ENCODE measurements at regions of chr19 and their contacts with region 1.

Region 1: DNA sequence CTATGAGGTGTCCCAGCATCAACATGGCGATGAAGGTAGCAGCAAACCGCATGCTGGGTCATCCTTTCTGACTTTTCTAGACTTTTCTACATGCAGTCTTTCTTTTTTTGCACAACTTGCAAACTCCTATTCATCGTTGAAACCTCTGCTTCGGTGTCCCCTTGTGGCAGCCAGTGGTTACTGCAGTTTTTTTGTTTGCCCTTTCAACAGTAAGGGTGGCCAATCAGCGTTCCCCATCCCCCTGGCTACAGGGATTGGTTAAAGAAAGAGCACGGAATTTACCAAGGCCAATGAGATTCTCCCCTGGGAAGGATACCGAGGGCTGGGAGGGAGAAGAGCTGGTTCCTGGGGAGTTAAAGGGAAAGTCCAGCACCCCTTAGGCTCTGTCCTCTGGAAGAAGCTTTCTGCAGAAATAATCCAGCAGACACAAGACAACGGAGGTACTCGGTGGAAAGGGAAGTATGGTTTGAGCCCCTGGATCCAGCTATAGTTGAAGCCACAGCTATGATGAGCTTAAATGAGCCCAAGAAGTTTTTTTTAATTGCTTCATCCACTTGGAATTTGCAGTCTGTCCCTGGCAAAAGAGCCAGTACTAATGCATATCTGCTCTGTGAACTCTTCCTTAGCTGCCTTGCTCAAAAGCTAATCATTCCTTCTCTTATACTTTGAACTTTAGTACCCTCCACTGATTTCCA is 5.6 kb upstream of the LSM4 start:
- DNase-seq: peak; percentile 87
- H3K4me3 ChIP-seq: peak overlapping the region; percentile 46
- CTCF ChIP-seq: peak; percentile 78

Region 2: GRCh38 chr19:18100710-18101109 is 227.8 kb before region 1 on chr19:
- CTCF ChIA-PET with region 1: no interaction called
- POLR2A ChIA-PET with region 1: no interaction called
- DNase-seq: no peak
- H3K4me3 ChIP-seq: no peak overlapping the region
- CTCF ChIP-seq: no peak

Region 3: DNA sequence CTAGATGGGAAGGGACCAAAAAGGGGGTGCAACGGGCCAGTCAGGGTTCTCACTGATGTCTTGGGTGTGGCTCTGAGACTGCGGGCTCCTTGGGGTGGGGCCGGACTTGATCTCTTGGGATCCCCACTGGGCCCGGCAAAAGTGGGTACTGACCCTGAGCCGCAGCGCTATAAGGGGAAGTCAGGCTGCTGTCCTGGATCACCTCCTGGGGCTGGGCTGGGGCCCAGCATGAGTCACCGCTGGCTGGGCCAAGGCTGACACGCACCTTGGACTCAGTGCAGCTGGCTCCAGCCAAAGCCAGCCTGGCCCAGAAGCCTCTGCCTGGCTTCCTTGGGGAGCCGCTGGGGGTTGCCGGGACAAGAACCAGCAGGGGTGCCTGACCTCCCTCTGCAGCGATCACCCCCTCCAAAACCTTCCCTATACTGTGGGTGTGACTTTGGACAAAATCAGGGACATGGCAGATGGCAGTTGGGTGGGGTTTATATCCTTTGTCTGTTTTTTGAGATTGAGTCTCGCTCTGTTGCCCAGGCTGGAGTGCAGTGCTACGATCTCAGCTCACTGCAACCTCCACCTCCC is 53.6 kb before region 1 on chr19:
- CTCF ChIA-PET with region 1: interaction called, 321 read pairs
- POLR2A ChIA-PET with region 1: interaction called, 87 read pairs
- DNase-seq: no peak
- H3K4me3 ChIP-seq: no peak overlapping the region
- CTCF ChIP-seq: no peak

Region 4: GRCh38 chr19:18340190-18340989 is 11.9 kb after region 1 on chr19 and contains the start of gene PGPEP1:
- CTCF ChIA-PET with region 1: interaction called, 69 read pairs
- POLR2A ChIA-PET with region 1: interaction called, 4 read pairs
- DNase-seq: no peak
- H3K4me3 ChIP-seq: peak within 1 kb of the TSS; percentile 80
- CTCF ChIP-seq: no peak

Region 5: GRCh38 chr19:18364826-18365528 is 36.5 kb after region 1 on chr19:
- CTCF ChIA-PET with region 1: interaction called, 11 read pairs
- POLR2A ChIA-PET with region 1: interaction called, 3 read pairs
- DNase-seq: peak; percentile 99
- H3K4me3 ChIP-seq: no peak overlapping the region
- CTCF ChIP-seq: no peak

Region 6: GRCh38 chr19:18419195-18419698 is 90.8 kb after region 1 on chr19 and contains the start of gene SSBP4:
- CTCF ChIA-PET with region 1: interaction called, 15 read pairs
- POLR2A ChIA-PET with region 1: no interaction called
- DNase-seq: no peak
- H3K4me3 ChIP-seq: peak within 1 kb of the TSS; percentile 73
- CTCF ChIP-seq: peak; percentile 24